ENCODE measurements at regions of chr13 and their contacts with region 1.

Region 1: GRCh38 chr13:40770934-40771618 is at the start of gene MRPS31:
- DNase-seq: peak; percentile 97 to 98
- H3K4me3 ChIP-seq: peak within 1 kb of the TSS; percentile 67
- H3K4me3 Mint-ChIP-seq: peak within 1 kb of the TSS; percentile 93
- H3K27ac Mint-ChIP-seq: peak within 1 kb of the TSS; percentile 88
- H3K4me1 ChIP-seq: peaks cover 22% of the 10 kb centered on the region
- H3K4me1 Mint-ChIP-seq: peaks cover 7% of the 10 kb centered on the region
- H3K27me3 ChIP-seq: no peaks in the 10 kb centered on the region
- H3K27me3 Mint-ChIP-seq: no peaks in the 10 kb centered on the region
- CTCF ChIP-seq: no peak
- total RNA-seq, gene MRPS31: 34.4 and 37.0 TPM in 2 replicates

Region 2: GRCh38 chr13:39803179-39803578 is 967.9 kb before region 1 on chr13:
- CTCF ChIA-PET with region 1: no interaction called
- POLR2A ChIA-PET with region 1: no interaction called
- intact Hi-C with region 1: loop called (anchors 1 kb)
- DNase-seq: peak; percentile 84 to 87
- H3K4me3 ChIP-seq: no peak overlapping the region
- H3K4me3 Mint-ChIP-seq: no peak overlapping the region
- H3K27ac Mint-ChIP-seq: peak overlapping the region; percentile 74
- H3K4me1 ChIP-seq: peaks cover 14% of the 10 kb centered on the region
- H3K4me1 Mint-ChIP-seq: peaks cover 29% of the 10 kb centered on the region
- H3K27me3 ChIP-seq: no peaks in the 10 kb centered on the region
- H3K27me3 Mint-ChIP-seq: no peaks in the 10 kb centered on the region
- CTCF ChIP-seq: no peak

Region 3: DNA sequence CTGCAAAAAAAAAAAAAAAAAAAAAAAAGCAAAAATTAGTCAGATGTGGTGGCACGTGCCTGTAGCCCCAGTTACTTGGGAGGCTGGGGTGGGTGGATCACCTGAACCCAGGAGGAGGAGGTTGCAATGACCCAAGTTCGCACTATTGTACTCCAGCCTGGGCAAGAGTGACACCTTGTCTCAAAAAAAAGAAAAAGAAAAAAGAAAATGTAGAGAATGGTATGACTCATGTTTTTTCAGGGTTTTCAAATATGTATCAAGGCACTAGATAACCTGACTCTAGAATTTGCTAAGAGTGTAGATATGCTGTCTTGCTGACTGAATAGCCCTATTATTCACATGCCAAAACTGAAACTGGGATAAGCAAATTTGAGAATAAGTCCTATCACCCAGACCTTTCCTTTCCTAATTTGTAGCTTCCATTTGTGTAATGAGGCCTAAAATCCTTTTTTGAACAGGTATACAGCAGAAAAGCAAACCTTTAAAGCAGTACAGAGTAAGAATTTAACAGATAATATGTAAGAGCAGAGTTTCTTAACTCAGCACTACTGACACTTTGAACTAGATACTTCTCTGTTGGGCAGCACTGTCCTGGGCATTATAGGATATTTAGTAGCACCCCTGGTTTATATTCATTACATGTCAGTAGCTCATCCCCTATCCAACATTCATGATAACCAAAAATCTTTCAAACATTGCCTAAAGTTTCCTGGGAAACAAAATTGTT is 139.4 kb after region 1 on chr13:
- CTCF ChIA-PET with region 1: no interaction called
- POLR2A ChIA-PET with region 1: no interaction called
- intact Hi-C with region 1: loop called (anchors 2 kb)
- DNase-seq: no peak
- H3K4me3 ChIP-seq: no peak overlapping the region
- H3K4me3 Mint-ChIP-seq: no peak overlapping the region
- H3K27ac Mint-ChIP-seq: no peak overlapping the region
- H3K4me1 ChIP-seq: peaks cover 5% of the 10 kb centered on the region
- H3K4me1 Mint-ChIP-seq: peaks cover 13% of the 10 kb centered on the region
- H3K27me3 ChIP-seq: no peaks in the 10 kb centered on the region
- H3K27me3 Mint-ChIP-seq: no peaks in the 10 kb centered on the region
- CTCF ChIP-seq: no peak

Measured in Caco-2 (cell line).